Right ventricle myocardium superior (tissue), 1 donor: ENCODE measurements at regions of chr10 and their contacts with region 1.

Region 1: DNA sequence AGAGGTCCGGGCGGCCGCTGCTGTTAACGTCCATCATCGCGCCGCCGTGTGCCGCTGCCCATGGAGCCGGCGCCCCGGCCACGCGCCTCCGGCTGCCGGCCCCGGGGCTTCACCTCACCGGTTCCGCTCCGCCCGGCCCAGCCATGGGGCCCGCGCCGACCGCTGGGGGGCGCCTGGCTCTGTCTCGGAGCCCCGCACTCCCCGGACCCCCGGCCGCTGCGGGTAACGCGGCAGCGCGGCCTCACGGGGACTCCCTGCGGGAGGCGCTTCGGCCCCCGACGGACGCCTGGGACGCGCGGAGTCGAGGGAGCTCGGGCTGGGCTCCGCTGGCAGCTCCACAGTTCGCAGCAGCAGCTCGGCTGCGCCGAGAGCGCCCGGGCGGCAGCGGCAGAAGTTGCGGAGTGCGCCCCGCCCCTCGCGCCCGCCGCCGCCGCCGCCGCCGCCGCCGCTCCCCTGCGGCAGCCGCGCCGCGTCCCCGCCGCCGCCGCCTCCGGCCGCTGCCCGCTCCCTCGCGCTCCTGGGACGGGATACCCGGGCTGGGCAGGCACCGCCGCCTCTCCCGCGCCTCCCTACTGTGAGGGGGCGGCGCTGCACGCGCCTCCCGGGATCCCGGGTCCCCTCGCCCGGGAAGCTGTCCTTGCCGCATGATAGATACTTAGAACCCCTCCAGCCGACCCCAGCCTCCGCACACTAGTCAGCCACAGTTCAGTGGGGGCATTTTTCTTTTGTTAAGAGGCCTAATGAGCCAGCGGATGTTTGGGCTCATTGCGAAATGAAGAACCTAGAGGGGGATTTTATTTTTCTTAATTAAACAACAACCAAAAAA is at the start of gene HTR7:
- DNase-seq: peak; percentile 79
- ATAC-seq: peak; percentile 93
- total RNA-seq, gene HTR7: 0.16 TPM

Region 2: DNA sequence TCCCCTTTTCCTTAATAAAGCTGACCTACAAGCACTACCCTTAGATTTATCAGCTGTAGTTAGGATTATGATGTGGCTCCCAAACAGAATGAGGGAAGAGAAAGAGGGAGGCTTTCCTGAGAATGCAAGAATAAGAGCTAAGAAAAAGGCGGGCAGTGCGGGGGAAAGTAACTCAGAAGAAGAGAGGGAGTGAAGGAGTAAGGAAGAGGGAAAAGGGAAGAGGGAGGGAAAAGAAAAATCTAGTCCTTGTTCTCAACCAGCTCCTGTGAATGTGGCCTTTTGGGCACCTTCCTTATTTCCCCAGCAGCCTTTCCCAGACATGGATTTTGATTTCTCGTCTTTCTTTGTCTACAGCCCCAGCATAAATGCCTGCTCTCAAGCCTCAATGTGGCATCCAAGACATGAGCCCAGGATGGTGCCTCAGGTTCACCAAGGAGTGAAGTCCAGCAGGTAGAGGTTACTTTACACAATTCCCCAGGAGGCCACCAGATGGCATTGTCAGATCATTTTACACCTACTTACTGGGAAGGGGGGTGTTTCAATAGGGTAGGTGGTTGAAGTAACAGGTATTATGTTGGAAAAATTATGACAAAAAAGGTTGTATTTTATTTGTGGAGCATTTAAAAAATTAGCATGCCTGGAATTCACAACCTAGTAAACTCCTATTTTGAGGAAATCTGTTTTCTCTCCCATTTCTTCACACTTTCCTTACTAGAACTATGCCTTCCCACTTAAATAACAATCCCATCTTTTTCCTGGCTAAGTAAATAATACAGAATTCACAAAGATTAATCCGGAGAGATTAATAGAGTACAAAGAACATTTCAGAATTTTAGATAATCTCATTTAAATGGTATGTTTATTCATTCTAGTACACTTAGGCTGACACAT is 106.5 kb before region 1 on chr10:
- intact Hi-C with region 1: loop called (anchors 5 kb)
- DNase-seq: no peak
- ATAC-seq: peak; percentile 70